Heart right ventricle (tissue), 16 donors: ENCODE measurements at regions of chr7 and their contacts with region 1.

Region 1: GRCh38 chr7:132580717-132581285 is 4.5 kb upstream of the PLXNA4 start:
- DNase-seq: peak; percentile 36 to 81
- ATAC-seq: peak; percentile 16 to 71 (median 59)
- H3K4me3 ChIP-seq: no peak overlapping the region
- H3K27ac ChIP-seq: no peak overlapping the region
- H3K4me1 ChIP-seq: peaks cover 0 to 24% (median 7%) of the 10 kb centered on the region in 9 donors
- H3K27me3 ChIP-seq: peaks cover 0 to 29% (median 15%) of the 10 kb centered on the region in 7 donors
- CTCF ChIP-seq: peak; percentile 43 to 86 (median 77)

Region 2: DNA sequence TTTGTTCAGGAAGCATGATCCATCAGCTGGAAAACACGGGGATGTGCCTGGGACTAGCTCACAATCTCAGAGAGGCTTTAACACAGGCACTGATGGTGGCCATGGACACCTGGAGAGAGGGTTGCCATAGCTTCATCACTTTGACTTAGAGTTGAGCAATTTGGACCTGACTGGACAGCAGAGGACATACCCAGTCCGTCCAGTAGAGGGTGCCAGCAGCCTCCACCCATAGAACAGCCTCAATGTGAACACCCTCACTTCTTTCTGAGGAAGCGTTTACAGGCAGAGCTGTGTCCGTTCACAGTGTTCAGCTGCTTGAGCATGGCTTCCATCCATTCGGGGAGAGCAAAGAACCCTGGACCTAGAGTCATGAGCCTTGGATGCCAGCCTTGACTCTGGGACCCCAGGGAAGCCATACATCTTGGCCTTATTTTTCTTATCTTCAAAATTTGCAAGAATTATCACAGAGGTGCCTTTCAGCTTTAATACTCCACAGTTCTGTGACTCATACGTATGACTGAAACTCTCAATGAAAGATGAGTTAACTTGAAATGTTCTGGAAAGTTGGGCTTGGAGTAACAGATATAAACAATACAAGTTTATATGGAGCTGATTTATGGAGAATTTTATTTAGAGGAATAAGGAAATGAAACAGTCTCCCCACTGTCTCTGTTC is 721.5 kb before region 1 on chr7:
- intact Hi-C with region 1: loop called in 1 of 10 experiments (anchors 10 kb)
- DNase-seq: peak; percentile 38 to 49
- ATAC-seq: peak in 6 of 8 donors; percentile 52 to 83 (median 70)
- H3K4me3 ChIP-seq: no peak overlapping the region
- H3K27ac ChIP-seq: no peak overlapping the region
- H3K4me1 ChIP-seq: peaks cover 0 to 11% (median 0%) of the 10 kb centered on the region in 9 donors
- H3K27me3 ChIP-seq: peaks cover 0 to 19% (median 0%) of the 10 kb centered on the region in 7 donors
- CTCF ChIP-seq: peak; percentile 45 to 87 (median 82)

Region 3: DNA sequence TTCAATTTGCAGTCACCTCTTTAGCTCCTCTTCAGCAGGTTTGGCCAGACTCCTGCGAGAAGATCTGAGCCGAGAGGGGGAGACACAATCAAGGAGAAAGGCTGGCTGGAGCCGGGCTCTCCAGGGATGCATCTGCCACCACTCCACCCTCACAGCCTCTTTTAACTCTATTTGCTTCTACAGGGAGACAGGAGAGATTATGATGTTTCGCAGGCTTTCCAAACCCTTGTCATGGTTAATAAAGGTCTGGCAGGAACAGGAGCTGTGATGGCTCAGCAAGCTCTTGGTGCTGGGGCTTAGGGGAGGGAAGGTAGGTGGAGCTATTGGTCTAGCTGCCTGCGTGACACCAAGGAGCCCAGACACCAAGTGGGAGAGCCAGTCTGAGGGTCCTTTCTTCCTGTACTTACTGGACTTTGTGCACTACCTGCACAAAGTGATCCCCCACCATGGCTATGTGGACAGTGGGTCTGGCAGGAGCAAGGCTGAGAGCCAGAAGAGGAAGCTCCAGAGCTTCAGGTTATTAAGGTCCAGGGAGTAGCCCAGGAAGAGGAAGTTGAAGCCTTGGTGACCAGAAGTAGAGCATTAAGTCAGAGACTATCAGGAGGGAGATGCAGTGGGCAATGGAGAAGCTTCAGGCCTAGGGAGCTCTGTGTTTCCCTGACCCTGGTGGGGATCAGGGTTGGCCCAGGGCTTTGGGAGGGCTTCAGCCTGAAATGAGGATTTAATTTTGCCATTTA is 576.1 kb before region 1 on chr7:
- intact Hi-C with region 1: loop called in 1 of 10 experiments (anchors 10 kb)
- DNase-seq: peak; percentile 25 to 30
- ATAC-seq: peak in 7 of 8 donors; percentile 75 to 89 (median 86)
- H3K4me3 ChIP-seq: no peak overlapping the region
- H3K27ac ChIP-seq: no peak overlapping the region
- H3K4me1 ChIP-seq: peaks cover 0 to 6% (median 0%) of the 10 kb centered on the region in 9 donors
- H3K27me3 ChIP-seq: peaks cover 0 to 3% (median 0%) of the 10 kb centered on the region in 7 donors
- CTCF ChIP-seq: peak in 8 of 9 donors; percentile 9 to 63 (median 49)

Region 4: GRCh38 chr7:132386201-132386681 is 194.6 kb before region 1 on chr7:
- intact Hi-C with region 1: loop called in 4 of 10 experiments (anchors 5 to 10 kb)
- DNase-seq: peak; percentile 38 to 46
- ATAC-seq: peak; percentile 67 to 85 (median 76)
- H3K4me3 ChIP-seq: no peak overlapping the region
- H3K27ac ChIP-seq: no peak overlapping the region
- H3K4me1 ChIP-seq: peaks cover 0 to 36% (median 9%) of the 10 kb centered on the region in 9 donors
- H3K27me3 ChIP-seq: no peaks in the 10 kb centered on the region
- CTCF ChIP-seq: no peak

Region 5: DNA sequence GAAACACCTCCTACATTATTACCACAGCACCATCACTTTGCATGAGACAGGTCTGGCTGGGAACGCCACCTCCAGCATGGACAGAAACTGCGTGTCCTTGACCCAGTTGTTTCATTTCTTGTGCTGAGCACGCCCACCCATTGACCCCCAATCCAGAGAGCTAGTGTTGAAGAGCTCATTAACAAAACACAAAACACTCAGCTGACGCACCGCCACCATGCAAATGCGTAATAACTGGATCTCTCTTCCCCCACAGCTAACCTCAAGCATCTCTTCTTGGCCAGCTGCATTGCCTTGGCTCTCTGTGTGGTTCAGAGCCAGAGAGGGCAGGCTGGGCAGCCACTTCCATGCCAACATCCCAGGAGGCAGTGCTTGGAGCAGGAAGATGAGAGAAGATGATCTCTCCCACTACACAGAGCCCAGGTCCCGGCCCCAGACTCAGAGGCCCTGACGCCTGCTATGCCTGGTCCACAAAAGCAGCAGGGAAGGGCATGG is 178.0 kb before region 1 on chr7:
- intact Hi-C with region 1: loop called in 6 of 10 experiments (anchors 5 to 10 kb)
- DNase-seq: peak; percentile 32 to 42
- ATAC-seq: peak; percentile 44 to 89 (median 72)
- H3K4me3 ChIP-seq: peak overlapping the region in 1 of 10 donors; percentile 1
- H3K27ac ChIP-seq: peak overlapping the region in 8 of 10 donors; percentile 56 to 75 (median 62)
- H3K4me1 ChIP-seq: peaks cover 6 to 64% (median 36%) of the 10 kb centered on the region in 9 donors
- H3K27me3 ChIP-seq: no peaks in the 10 kb centered on the region
- CTCF ChIP-seq: no peak

Region 6: DNA sequence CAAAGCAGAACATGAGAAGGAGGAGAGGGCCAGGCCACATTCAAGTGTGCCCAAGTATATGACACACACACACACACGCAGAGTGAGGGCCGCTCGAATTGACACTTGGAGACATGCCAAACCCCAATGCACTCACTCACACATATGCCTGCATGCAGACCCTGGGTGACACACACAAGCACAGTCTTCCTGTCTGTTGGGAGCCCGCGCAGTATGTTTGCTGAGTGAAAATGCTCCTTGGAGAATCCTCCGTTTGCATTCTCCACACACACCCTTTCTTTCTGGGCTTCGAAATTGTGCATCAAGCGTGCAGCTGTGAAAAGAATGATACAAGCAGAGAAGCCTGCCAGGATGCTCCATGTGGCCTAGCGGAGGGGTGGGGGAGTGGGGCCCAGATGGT is 125.4 kb before region 1 on chr7:
- intact Hi-C with region 1: no loop called
- DNase-seq: no peak
- ATAC-seq: peak in 4 of 8 donors; percentile 17 to 33 (median 22)
- H3K4me3 ChIP-seq: no peak overlapping the region
- H3K27ac ChIP-seq: no peak overlapping the region
- H3K4me1 ChIP-seq: peaks cover 0 to 22% (median 9%) of the 10 kb centered on the region in 9 donors
- H3K27me3 ChIP-seq: no peaks in the 10 kb centered on the region
- CTCF ChIP-seq: no peak

Region 7: GRCh38 chr7:132518102-132518838 is 62.5 kb before region 1 on chr7:
- intact Hi-C with region 1: loop called in 2 of 10 experiments (anchors 5 to 10 kb)
- DNase-seq: no peak
- ATAC-seq: no peak
- H3K4me3 ChIP-seq: no peak overlapping the region
- H3K27ac ChIP-seq: no peak overlapping the region
- H3K4me1 ChIP-seq: peaks cover 0 to 46% (median 14%) of the 10 kb centered on the region in 9 donors
- H3K27me3 ChIP-seq: no peaks in the 10 kb centered on the region
- CTCF ChIP-seq: peak in 6 of 9 donors; percentile 6 to 40 (median 22)